Endothelial cell of umbilical vein (primary cell): ENCODE measurements at regions of chr12 and their contacts with region 1.

Region 1: GRCh38 chr12:47686645-47687240 is 19.1 kb downstream of the RPAP3 start:
- DNase-seq: peak; percentile 54
- H3K4me3 ChIP-seq: no peak overlapping the region
- H3K27ac ChIP-seq: no peak overlapping the region
- H3K4me1 ChIP-seq: no peaks in the 10 kb centered on the region
- H3K27me3 ChIP-seq: no peaks in the 10 kb centered on the region
- CTCF ChIP-seq: peak; percentile 20 to 61
- POLR2A ChIP-seq: no peak

Region 2: GRCh38 chr12:47547085-47547484 is 139.7 kb before region 1 on chr12:
- CTCF ChIA-PET with region 1: interaction called, 52 read pairs
- POLR2A ChIA-PET with region 1: no interaction called
- dilution Hi-C with region 1: no loop called
- intact Hi-C with region 1: loop called (anchors 1 kb)
- DNase-seq: peak; percentile 69
- H3K4me3 ChIP-seq: no peak overlapping the region
- H3K27ac ChIP-seq: no peak overlapping the region
- H3K4me1 ChIP-seq: no peaks in the 10 kb centered on the region
- H3K27me3 ChIP-seq: peaks cover 3 to 4% of the 10 kb centered on the region in 2 experiments
- CTCF ChIP-seq: peak; percentile 40 to 46
- POLR2A ChIP-seq: no peak

Region 3: GRCh38 chr12:47698055-47698454 is 11.3 kb after region 1 on chr12:
- CTCF ChIA-PET with region 1: interaction called, 12 read pairs
- POLR2A ChIA-PET with region 1: no interaction called
- dilution Hi-C with region 1: no loop called
- intact Hi-C with region 1: no loop called
- DNase-seq: no peak
- H3K4me3 ChIP-seq: no peak overlapping the region
- H3K27ac ChIP-seq: no peak overlapping the region
- H3K4me1 ChIP-seq: no peaks in the 10 kb centered on the region
- H3K27me3 ChIP-seq: no peaks in the 10 kb centered on the region
- CTCF ChIP-seq: no peak
- POLR2A ChIP-seq: no peak

Region 4: GRCh38 chr12:47705566-47706425 is 19.1 kb after region 1 on chr12 and contains the start of gene RPAP3:
- CTCF ChIA-PET with region 1: interaction called, 12 read pairs
- POLR2A ChIA-PET with region 1: no interaction called
- dilution Hi-C with region 1: no loop called
- intact Hi-C with region 1: no loop called
- DNase-seq: peak; percentile 93
- H3K4me3 ChIP-seq: peak within 1 kb of the TSS; percentile 65 to 90 (median 83)
- H3K27ac ChIP-seq: peak within 1 kb of the TSS; percentile 61
- H3K4me1 ChIP-seq: peaks cover 14% of the 10 kb centered on the region
- H3K27me3 ChIP-seq: no peaks in the 10 kb centered on the region
- CTCF ChIP-seq: peak; percentile 62 to 78
- POLR2A ChIP-seq: peak; percentile 87
- total RNA-seq, gene RPAP3: 29.8 and 32.5 TPM in 2 replicates

Region 5: DNA sequence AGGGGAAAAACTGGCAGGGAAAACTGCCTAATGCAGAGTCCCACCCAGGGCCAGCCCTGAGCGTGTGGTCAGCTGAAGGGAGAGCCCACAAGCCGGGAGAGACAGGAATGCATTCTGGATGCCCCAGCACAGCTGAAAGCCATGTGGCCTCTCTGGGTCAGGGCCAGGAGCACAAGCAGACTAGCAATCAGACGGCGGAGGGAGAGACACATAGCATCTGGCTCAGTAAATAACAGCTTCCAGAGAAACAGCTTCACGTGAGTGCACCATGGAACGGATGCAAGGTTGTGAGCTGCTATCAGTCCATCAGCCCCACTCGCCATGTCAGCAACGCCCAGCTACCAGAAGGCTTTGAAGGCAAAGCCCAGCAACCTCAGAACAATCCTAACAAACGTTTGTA is 248.4 kb after region 1 on chr12:
- CTCF ChIA-PET with region 1: no interaction called
- POLR2A ChIA-PET with region 1: no interaction called
- dilution Hi-C with region 1: no loop called
- intact Hi-C with region 1: no loop called
- DNase-seq: no peak
- H3K4me3 ChIP-seq: no peak overlapping the region
- H3K27ac ChIP-seq: no peak overlapping the region
- H3K4me1 ChIP-seq: no peaks in the 10 kb centered on the region
- H3K27me3 ChIP-seq: peaks cover 19 to 25% of the 10 kb centered on the region in 2 experiments
- CTCF ChIP-seq: no peak
- POLR2A ChIP-seq: no peak